Activated naive CD4-positive, alpha-beta T cell treated with anti-CD3 and anti-CD28 coated beads for 36 hours (primary cell): ENCODE measurements at regions of chr9 and their contacts with region 1.

Region 1: DNA sequence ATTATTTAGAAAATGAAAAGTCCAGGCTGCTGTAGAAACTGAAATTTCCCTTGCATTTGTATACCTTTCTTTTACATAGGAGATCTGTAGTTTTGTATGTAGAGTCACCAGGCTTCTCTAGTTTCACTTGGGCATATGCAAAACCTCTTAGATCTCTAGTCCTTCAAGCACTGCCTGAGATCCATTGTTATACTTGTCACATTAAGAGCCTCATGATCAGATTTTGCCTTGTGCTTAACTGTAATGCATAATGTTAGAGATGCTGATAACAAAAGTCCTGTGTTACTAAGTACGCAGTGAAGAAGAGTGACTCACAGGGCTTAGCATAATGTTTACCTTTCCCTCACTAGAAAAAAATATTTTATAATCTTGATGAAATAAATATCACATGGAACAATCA is 250.2 kb downstream of the CYLC2 start:
- DNase-seq: no peak
- H3K4me3 Mint-ChIP-seq: no peak overlapping the region
- H3K27ac Mint-ChIP-seq: no peak overlapping the region
- H3K4me1 Mint-ChIP-seq: no peaks in the 10 kb centered on the region
- H3K27me3 Mint-ChIP-seq: no peaks in the 10 kb centered on the region

Region 2: GRCh38 chr9:103183701-103184171 is 61.6 kb before region 1 on chr9:
- CTCF ChIA-PET with region 1: no interaction called
- intact Hi-C with region 1: no loop called
- DNase-seq: no peak
- H3K4me3 Mint-ChIP-seq: no peak overlapping the region
- H3K27ac Mint-ChIP-seq: no peak overlapping the region
- H3K4me1 Mint-ChIP-seq: no peaks in the 10 kb centered on the region
- H3K27me3 Mint-ChIP-seq: no peaks in the 10 kb centered on the region

Region 3: DNA sequence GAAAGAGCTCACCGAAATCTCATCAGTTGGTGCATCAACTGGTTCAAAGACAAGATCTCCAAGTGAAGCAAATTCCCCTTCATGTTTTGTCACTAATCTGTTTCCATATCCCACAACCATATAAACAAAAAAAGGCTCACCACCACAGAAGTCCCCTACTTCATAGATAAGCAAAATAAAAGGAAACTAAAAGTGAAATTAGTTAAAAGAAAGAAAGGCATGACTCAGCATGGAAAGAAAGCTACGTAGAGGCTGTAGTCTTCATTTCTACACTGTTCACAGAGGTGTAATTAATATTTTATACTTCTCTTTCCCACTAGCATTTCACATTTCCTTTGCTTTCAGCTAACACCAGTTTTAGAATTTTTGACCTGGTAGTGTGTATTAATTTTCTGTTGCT is 42.2 kb before region 1 on chr9:
- CTCF ChIA-PET with region 1: no interaction called
- intact Hi-C with region 1: loop called (anchors 2 kb)
- DNase-seq: no peak
- H3K4me3 Mint-ChIP-seq: no peak overlapping the region
- H3K27ac Mint-ChIP-seq: no peak overlapping the region
- H3K4me1 Mint-ChIP-seq: no peaks in the 10 kb centered on the region
- H3K27me3 Mint-ChIP-seq: no peaks in the 10 kb centered on the region